Activated naive CD4-positive, alpha-beta T cell treated with anti-CD3 and anti-CD28 coated beads for 36 hours (primary cell): ENCODE measurements at regions of chr10 and their contacts with region 1.

Region 1: GRCh38 chr10:78007172-78007571 is 22.1 kb downstream of the POLR3A start:
- DNase-seq: no peak
- H3K4me3 Mint-ChIP-seq: no peak overlapping the region
- H3K27ac Mint-ChIP-seq: no peak overlapping the region
- H3K4me1 Mint-ChIP-seq: no peaks in the 10 kb centered on the region
- H3K27me3 Mint-ChIP-seq: no peaks in the 10 kb centered on the region

Region 2: DNA sequence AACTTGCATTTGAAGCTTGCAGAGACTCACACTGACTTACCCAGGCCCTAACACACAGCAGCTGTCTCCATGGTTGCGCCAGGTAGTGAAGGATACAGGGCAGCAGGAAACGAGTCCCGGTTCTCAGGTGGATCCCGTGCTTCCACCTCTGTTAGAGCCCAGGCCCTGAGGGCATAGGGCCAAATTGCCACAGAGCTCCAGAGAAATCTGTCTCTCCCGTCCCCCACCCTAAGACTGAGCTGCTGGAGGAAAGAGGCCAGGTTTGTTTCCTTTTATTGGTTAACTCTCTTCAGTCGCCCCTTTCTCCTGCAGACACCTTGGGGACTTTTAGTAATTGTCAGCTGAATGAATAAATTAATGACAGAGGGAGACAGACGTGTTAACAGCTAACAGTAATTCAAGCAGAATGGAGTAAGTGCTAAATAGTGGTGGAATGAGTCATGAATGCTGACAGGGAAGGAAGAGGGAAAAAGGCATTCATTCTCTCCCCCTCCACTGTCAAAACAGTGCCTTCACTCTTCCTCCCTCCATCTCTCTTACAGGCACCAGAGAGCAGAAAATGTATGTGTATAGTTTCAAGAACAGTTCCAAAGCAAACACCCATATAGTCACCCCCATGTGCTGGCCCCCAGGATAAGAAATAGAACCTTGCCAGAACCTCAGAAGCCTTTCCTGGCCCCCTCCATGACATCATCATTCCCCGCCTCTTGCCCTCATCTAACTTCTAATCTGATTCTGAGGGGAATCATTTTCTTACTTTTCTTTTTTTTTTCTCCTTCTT is 63.9 kb before region 1 on chr10:
- CTCF ChIA-PET with region 1: no interaction called
- intact Hi-C with region 1: no loop called
- DNase-seq: no peak
- H3K4me3 Mint-ChIP-seq: no peak overlapping the region
- H3K27ac Mint-ChIP-seq: no peak overlapping the region
- H3K4me1 Mint-ChIP-seq: peaks cover 2% of the 10 kb centered on the region
- H3K27me3 Mint-ChIP-seq: peaks cover 13% of the 10 kb centered on the region

Region 3: GRCh38 chr10:78134773-78135305 is 127.7 kb after region 1 on chr10:
- CTCF ChIA-PET with region 1: no interaction called
- intact Hi-C with region 1: loop called (anchors 2 kb)
- DNase-seq: no peak
- H3K4me3 Mint-ChIP-seq: no peak overlapping the region
- H3K27ac Mint-ChIP-seq: no peak overlapping the region
- H3K4me1 Mint-ChIP-seq: no peaks in the 10 kb centered on the region
- H3K27me3 Mint-ChIP-seq: peaks cover 4% of the 10 kb centered on the region